ENCODE measurements at regions of chr16 and their contacts with region 1.

Region 1: DNA sequence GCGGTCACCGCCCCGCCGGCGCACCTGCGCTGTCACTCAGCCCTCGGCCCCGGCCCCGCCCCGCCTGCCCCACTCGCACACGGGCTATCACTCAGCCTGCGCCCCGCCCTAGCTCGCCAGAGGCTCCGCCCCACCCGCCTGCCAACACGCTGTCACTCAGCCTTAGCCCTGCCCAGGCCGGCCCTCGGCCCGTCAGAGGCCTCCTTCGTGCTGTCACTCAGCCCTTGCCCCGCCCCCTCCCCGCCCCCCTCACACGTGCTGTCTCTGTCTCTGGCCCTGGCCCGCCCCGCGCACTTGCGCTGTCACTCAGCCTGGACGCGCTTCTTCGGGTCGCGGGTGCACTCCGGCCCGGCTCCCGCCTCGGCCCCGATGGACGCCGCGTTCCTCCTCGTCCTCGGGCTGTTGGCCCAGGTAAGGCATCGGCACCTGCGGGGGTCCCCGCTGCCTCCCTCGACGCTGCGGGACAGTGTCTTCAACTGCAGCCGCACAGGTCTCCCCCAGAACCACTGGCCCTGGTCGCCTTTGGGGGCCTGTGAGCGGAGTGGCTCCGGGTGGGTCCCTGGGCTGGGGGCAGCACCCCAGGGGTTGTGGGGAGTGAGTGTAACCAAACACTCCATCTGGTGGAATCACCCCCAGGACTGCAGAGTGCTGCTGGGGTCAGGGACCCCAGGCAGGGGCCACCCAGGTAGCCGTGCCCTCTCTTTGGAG is at the start of gene CDH15:
- DNase-seq: peak; percentile 84
- ATAC-seq: peak; percentile 96
- H3K4me3 Mint-ChIP-seq: peak within 1 kb of the TSS; percentile 66
- H3K27ac Mint-ChIP-seq: no peak within 1 kb of the TSS
- H3K4me1 Mint-ChIP-seq: peaks cover 12% of the 10 kb centered on the region
- H3K27me3 Mint-ChIP-seq: peaks cover 2% of the 10 kb centered on the region
- CTCF ChIP-seq: no peak
- total RNA-seq, gene CDH15: not detected in 2 replicates

Region 2: GRCh38 chr16:88811769-88812512 is 359.7 kb before region 1 on chr16 and contains the start of gene APRT:
- CTCF ChIA-PET with region 1: interaction called, 10 read pairs
- POLR2A ChIA-PET with region 1: interaction called, 4 read pairs
- intact Hi-C with region 1: loop called (anchors 1 kb)
- DNase-seq: peak; percentile 99
- ATAC-seq: peak; percentile 86
- H3K4me3 Mint-ChIP-seq: peak within 1 kb of the TSS; percentile 91
- H3K27ac Mint-ChIP-seq: peak within 1 kb of the TSS; percentile 97
- H3K4me1 Mint-ChIP-seq: peaks cover 17% of the 10 kb centered on the region
- H3K27me3 Mint-ChIP-seq: no peaks in the 10 kb centered on the region
- CTCF ChIP-seq: no peak
- total RNA-seq, gene APRT: 198 and 209 TPM in 2 replicates

Region 3: GRCh38 chr16:88936556-88937205 is 234.9 kb before region 1 on chr16:
- CTCF ChIA-PET with region 1: interaction called, 6 read pairs
- POLR2A ChIA-PET with region 1: interaction called, 4 read pairs
- intact Hi-C with region 1: loop called (anchors 1 kb)
- DNase-seq: no peak
- ATAC-seq: peak; percentile 25
- H3K4me3 Mint-ChIP-seq: peak overlapping the region; percentile 76
- H3K27ac Mint-ChIP-seq: peak overlapping the region; percentile 84
- H3K4me1 Mint-ChIP-seq: peaks cover 46% of the 10 kb centered on the region
- H3K27me3 Mint-ChIP-seq: no peaks in the 10 kb centered on the region
- CTCF ChIP-seq: no peak

Region 4: GRCh38 chr16:89099905-89100304 is 71.7 kb before region 1 on chr16:
- CTCF ChIA-PET with region 1: no interaction called
- POLR2A ChIA-PET with region 1: no interaction called
- intact Hi-C with region 1: loop called (anchors 5 kb)
- DNase-seq: no peak
- ATAC-seq: no peak
- H3K4me3 Mint-ChIP-seq: no peak overlapping the region
- H3K27ac Mint-ChIP-seq: no peak overlapping the region
- H3K4me1 Mint-ChIP-seq: peaks cover 54% of the 10 kb centered on the region
- H3K27me3 Mint-ChIP-seq: no peaks in the 10 kb centered on the region
- CTCF ChIP-seq: no peak

Region 5: GRCh38 chr16:89193021-89193575 is 21.5 kb after region 1 on chr16:
- CTCF ChIA-PET with region 1: no interaction called
- POLR2A ChIA-PET with region 1: no interaction called
- intact Hi-C with region 1: loop called (anchors 1 kb)
- DNase-seq: no peak
- ATAC-seq: no peak
- H3K4me3 Mint-ChIP-seq: no peak overlapping the region
- H3K27ac Mint-ChIP-seq: no peak overlapping the region
- H3K4me1 Mint-ChIP-seq: peaks cover 3% of the 10 kb centered on the region
- H3K27me3 Mint-ChIP-seq: peaks cover 2% of the 10 kb centered on the region
- CTCF ChIP-seq: no peak

Region 6: GRCh38 chr16:89201439-89202377 is 30.1 kb after region 1 on chr16:
- CTCF ChIA-PET with region 1: no interaction called
- POLR2A ChIA-PET with region 1: no interaction called
- intact Hi-C with region 1: loop called (anchors 1 kb)
- DNase-seq: peak; percentile 72
- ATAC-seq: peak; percentile 97
- H3K4me3 Mint-ChIP-seq: peak overlapping the region; percentile 67
- H3K27ac Mint-ChIP-seq: no peak overlapping the region
- H3K4me1 Mint-ChIP-seq: peaks cover 14% of the 10 kb centered on the region
- H3K27me3 Mint-ChIP-seq: peaks cover 37% of the 10 kb centered on the region
- CTCF ChIP-seq: no peak

Measured in activated B cell treated with CpG ODN at 0.5 μM for 24 hours (primary cell).